Motor neuron (in vitro differentiated cells): ENCODE measurements at regions of chr10 and their contacts with region 1.

Region 1: GRCh38 chr10:34960983-34961382 is 129.2 kb downstream of the CUL2 start:
- ATAC-seq: peak in 4 of 8 experiments; percentile 26 to 71 (median 44)
- H3K4me3 ChIP-seq: no peak overlapping the region
- H3K27ac ChIP-seq: no peak overlapping the region
- H3K4me1 ChIP-seq: peaks cover 3 to 9% of the 10 kb centered on the region in 2 donors

Region 2: GRCh38 chr10:34655286-34656170 is 305.5 kb before region 1 on chr10:
- in situ Hi-C with region 1: no loop called
- ATAC-seq: peak in 6 of 8 experiments; percentile 2 to 49 (median 26)
- H3K4me3 ChIP-seq: no peak overlapping the region
- H3K27ac ChIP-seq: no peak overlapping the region
- H3K4me1 ChIP-seq: peaks cover 0 to 22% of the 10 kb centered on the region in 2 donors

Region 3: DNA sequence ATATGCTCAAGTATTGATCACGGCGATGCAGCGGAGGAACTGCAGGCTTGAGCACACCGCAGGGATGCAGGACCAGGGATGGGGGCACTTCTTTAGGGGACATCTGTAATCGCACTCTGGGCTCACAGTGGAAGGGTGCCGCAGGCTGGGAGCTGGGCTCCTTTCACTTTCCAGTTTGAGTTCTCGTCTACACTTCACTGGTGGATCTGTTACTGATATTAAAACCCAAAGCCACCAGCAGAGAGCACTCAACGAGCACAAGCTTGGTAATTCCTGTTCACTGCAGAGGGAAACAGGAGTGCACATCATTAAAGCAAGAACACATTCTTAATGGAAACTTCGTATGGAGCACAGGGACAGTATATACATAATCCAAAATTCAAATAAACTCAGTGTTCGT is 237.2 kb before region 1 on chr10:
- in situ Hi-C with region 1: loop called in 1 of 9 experiments (anchors 25 kb)
- ATAC-seq: peak; percentile 73 to 97 (median 78)
- H3K4me3 ChIP-seq: no peak overlapping the region
- H3K27ac ChIP-seq: no peak overlapping the region
- H3K4me1 ChIP-seq: peaks cover 5 to 15% of the 10 kb centered on the region in 2 donors

Region 4: GRCh38 chr10:34889004-34889869 is 71.7 kb before region 1 on chr10:
- in situ Hi-C with region 1: no loop called
- ATAC-seq: no peak
- H3K4me3 ChIP-seq: no peak overlapping the region
- H3K27ac ChIP-seq: no peak overlapping the region
- H3K4me1 ChIP-seq: no peaks in the 10 kb centered on the region

Region 5: GRCh38 chr10:36114913-36115312 is 1153.9 kb after region 1 on chr10:
- in situ Hi-C with region 1: no loop called
- ATAC-seq: no peak
- H3K4me3 ChIP-seq: no peak overlapping the region
- H3K27ac ChIP-seq: no peak overlapping the region
- H3K4me1 ChIP-seq: peaks cover 5 to 6% of the 10 kb centered on the region in 2 donors